ENCODE measurements at regions of chr2 and their contacts with region 1.

Region 1: DNA sequence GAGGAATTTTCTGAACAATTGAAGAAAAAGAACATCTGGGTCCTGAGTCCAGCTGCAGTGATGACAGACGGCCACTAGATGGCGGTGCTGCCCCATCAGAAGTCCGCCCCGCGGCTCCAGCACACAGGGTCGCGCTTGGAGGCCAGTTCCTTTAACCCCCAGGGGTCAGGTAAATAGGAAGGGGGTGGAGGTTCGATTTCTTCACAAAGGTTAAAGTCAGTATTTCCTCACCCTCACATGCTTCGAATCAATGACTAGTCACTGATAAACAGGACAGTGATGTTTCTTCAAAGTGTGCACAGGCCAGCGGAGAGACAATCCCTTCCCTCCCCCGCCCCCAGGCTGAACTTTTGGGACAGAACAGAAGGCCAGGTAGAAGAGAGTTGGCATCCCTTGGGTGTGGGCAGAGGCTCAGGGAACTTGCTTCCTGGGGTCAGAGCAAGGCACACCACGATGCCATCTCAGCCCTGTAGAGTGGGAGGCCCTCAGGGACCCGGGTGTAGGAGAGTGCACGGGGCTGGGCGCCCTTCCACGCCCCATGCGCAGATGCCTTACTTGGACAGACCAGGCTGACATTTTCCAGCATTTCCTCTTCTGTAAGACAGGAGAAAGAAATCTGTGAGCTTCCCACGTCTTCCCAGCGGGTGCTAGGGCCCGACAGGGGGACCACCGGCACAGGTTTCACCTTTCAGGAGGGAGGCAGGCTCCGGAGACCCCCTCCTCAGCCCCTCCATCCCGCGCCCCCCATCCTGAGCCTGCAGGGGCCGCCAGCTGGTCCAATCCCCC is 722 bp downstream of the APOB start:
- DNase-seq: peak; percentile 79
- ATAC-seq: peak; percentile 75

Region 2: GRCh38 chr2:20880221-20880771 is 162.9 kb before region 1 on chr2:
- intact Hi-C with region 1: no loop called
- DNase-seq: no peak
- ATAC-seq: no peak

Region 3: GRCh38 chr2:21111012-21111411 is 67.9 kb after region 1 on chr2:
- intact Hi-C with region 1: loop called (anchors 5 kb)
- DNase-seq: no peak
- ATAC-seq: no peak

Region 4: GRCh38 chr2:21317131-21317530 is 274.0 kb after region 1 on chr2:
- intact Hi-C with region 1: loop called (anchors 5 kb)
- DNase-seq: peak; percentile 51
- ATAC-seq: peak; percentile 84